ENCODE measurements at regions of chr12 and their contacts with region 1.

Region 1: DNA sequence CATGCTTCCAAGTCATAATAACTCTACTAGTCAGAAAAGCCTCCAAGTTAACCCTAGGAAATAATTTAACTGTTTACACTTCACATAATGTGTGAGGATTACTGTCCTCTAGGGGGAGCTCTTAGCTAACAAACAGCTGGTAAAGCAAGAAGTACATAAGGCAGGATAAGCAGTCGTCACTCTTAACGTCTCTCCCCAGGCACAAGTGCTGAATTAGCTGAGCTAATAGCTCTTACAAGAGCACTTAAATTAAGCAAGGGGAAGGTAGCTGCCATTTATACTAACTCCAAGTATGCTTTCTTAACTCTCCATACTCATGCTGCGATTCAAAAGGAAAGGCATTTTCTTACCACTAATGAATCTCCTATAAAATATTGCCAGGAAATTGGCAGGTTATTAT is 79.3 kb upstream of the TSPAN11 start:
- DNase-seq: peak; percentile 86
- H3K4me3 Mint-ChIP-seq: no peak overlapping the region
- H3K27ac Mint-ChIP-seq: no peak overlapping the region
- H3K4me1 Mint-ChIP-seq: peaks cover 13% of the 10 kb centered on the region
- H3K27me3 Mint-ChIP-seq: peaks cover 4% of the 10 kb centered on the region

Region 2: GRCh38 chr12:29519585-29520182 is 1327.6 kb before region 1 on chr12:
- intact Hi-C with region 1: loop called (anchors 1 kb)
- DNase-seq: peak; percentile 68
- H3K4me3 Mint-ChIP-seq: no peak overlapping the region
- H3K27ac Mint-ChIP-seq: no peak overlapping the region
- H3K4me1 Mint-ChIP-seq: no peaks in the 10 kb centered on the region
- H3K27me3 Mint-ChIP-seq: peaks cover 5% of the 10 kb centered on the region

Region 3: DNA sequence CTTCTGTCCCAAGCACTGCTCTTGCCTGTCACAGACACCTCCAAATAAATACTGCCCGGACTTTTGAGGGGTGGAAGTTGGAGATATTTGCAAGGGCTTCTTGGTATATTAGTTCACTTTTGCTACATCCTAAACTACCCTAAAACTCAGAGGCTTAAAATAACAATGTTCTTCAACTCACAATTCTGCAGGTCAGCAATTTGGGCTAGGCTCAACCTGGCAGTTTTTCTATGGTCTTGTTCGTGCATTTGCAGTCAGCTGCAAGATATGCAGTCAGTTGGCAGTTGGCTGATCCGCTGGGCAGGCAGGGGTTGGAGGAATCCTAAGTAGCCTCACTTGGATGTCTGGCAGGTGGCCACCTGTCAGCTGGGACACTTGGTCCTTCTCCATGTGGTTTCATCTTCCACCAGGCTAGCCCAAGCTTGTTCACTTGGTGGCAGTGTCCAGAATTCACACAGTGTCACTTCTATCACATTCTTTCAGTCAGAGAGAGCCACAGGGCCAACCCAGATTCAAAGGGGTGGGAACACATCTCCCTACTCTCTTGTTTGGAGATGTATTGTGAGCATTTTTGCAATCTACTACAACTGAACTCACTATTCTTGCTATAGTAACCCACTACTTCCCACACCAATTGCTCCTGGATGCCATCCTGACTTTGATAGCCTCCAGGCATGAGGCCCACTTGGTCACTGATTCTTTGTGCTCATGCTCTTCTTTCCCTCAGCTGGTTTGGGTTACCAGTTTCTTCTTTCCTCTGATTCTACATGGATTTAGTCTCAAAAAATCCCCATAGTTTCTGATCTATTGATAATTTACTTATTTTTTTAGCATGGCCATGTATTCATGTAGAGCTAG is 64.7 kb before region 1 on chr12:
- intact Hi-C with region 1: no loop called
- DNase-seq: no peak
- H3K4me3 Mint-ChIP-seq: no peak overlapping the region
- H3K27ac Mint-ChIP-seq: no peak overlapping the region
- H3K4me1 Mint-ChIP-seq: no peaks in the 10 kb centered on the region
- H3K27me3 Mint-ChIP-seq: peaks cover 28% of the 10 kb centered on the region

Region 4: DNA sequence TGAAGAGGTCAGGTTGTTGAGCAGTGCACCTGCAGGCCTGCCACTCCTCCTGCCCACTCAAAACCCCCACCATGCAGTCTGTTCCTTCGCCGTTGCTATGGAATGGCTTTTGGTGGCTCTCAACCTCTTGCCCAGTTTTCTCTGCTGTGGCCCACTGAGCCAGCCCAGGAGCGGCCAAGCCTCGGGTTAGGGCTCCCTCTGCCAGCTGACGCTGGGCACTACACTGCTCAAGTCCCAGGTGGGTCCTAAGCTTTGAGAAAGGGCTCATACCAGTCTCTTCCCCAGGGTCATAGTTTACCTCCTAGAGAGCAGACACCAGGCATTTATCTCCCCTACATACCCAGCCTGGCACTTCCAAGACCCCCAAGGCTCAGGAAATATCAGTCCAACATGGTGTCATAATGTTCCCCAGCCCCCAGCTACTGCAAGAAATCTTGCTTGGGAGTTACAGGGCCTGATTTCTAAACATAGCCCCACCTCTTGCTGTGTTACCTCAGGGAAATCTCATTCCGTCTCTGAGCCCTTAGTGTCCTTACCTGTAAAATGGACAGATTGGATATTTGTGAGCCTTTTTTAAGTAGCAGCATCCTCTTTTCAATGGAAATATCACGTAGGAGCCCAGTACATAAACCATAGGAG is 138.7 kb after region 1 on chr12:
- intact Hi-C with region 1: loop called (anchors 1 kb)
- DNase-seq: peak; percentile 68
- H3K4me3 Mint-ChIP-seq: no peak overlapping the region
- H3K27ac Mint-ChIP-seq: no peak overlapping the region
- H3K4me1 Mint-ChIP-seq: no peaks in the 10 kb centered on the region
- H3K27me3 Mint-ChIP-seq: no peaks in the 10 kb centered on the region

Region 5: GRCh38 chr12:31272607-31273225 is 425.5 kb after region 1 on chr12:
- intact Hi-C with region 1: loop called (anchors 1 kb)
- DNase-seq: no peak
- H3K4me3 Mint-ChIP-seq: no peak overlapping the region
- H3K27ac Mint-ChIP-seq: peak overlapping the region; percentile 26
- H3K4me1 Mint-ChIP-seq: no peaks in the 10 kb centered on the region
- H3K27me3 Mint-ChIP-seq: no peaks in the 10 kb centered on the region